Vagina (tissue), 2 donors: ENCODE measurements at regions of chr2 and their contacts with region 1.

Region 1: GRCh38 chr2:216692636-216693413 is 2.5 kb downstream of the IGFBP5 start:
- DNase-seq: peak in 1 of 2 donors; percentile 87
- H3K4me3 ChIP-seq: peak overlapping the region; percentile 68 to 88
- H3K27ac ChIP-seq: peak overlapping the region; percentile 90
- H3K4me1 ChIP-seq: peaks cover 51% of the 10 kb centered on the region
- H3K27me3 ChIP-seq: no peaks in the 10 kb centered on the region
- CTCF ChIP-seq: no peak
- POLR2A ChIP-seq: no peak

Region 2: DNA sequence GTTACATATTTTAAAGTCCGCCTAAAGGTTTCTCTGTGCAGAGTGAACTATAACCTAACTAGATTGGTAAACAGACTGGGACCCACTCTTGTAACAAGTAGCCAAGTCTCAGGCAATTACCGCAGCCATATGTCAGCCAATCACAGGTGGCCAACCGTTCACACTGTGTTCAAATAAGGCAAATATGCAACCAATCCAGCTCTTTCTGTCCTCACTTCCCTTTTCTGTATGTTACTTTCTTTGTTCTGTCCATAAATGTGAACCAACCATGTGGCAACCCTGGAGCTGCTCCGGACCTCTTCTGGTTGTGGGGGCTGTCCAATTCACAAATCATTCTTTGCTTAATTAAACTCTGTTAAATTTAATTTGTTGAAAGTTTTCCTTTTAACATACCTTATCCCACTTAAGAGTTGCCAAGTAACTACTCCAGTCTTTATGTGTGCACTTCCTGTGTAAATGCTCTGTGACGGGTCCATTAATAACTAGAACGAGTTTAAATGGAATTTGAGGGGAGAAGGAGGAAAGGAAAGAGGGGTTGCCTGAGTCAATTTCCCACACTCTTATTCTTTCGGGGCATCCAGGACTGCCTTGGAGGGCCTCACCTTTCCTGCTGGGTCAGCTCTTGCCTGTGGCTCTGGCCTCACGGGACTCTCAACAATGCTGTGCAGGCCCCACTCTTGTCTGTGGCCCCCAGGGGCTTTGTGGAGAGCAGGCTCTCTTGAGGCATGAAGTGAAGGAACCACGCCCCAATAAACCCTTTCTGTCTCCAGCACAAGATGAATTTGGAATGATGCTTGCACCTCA is 200.8 kb before region 1 on chr2:
- intact Hi-C with region 1: no loop called
- DNase-seq: no peak
- H3K4me3 ChIP-seq: no peak overlapping the region
- H3K27ac ChIP-seq: no peak overlapping the region
- H3K4me1 ChIP-seq: no peaks in the 10 kb centered on the region
- H3K27me3 ChIP-seq: no peaks in the 10 kb centered on the region
- CTCF ChIP-seq: no peak
- POLR2A ChIP-seq: no peak

Region 3: GRCh38 chr2:216619411-216620393 is 73.1 kb before region 1 on chr2:
- intact Hi-C with region 1: no loop called
- DNase-seq: no peak
- H3K4me3 ChIP-seq: no peak overlapping the region
- H3K27ac ChIP-seq: no peak overlapping the region
- H3K4me1 ChIP-seq: peaks cover 19% of the 10 kb centered on the region
- H3K27me3 ChIP-seq: no peaks in the 10 kb centered on the region
- CTCF ChIP-seq: no peak
- POLR2A ChIP-seq: no peak

Region 4: DNA sequence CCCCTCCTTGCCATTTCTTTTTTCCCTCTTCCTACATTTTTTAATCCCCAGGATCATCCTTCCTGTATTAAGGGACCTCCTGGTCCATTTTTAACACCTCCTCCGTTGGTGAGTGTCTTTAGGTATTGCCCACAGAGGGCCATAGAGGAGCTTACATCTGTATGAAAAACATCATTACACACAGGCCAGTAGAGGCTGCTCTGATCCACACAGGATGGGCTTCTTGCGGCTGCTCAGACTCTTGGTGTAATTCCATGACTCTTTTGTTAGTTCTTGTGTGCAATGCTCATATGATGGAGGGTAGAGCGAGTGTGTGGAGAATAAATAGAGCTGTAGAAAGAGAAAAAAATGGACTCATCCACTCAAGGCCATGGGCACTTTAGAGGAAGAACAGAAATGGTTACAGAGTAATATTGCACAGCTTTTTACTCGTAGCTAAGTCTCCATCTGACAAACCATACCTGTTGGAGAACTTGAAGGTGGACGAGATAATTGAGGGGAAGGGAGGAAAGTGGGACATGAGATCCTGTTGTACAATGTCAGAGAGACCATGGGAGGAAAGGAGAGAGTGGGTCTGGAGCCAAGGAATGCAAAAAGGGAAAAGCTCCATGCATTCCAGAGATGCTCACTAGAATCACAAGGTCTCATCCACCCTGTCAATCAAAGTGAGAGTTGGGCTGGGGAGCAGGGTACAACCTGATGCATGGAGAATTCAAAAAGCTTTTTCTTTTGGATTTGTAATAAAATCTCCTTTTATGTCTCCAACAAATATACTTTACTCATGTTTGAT is 296.7 kb after region 1 on chr2:
- intact Hi-C with region 1: loop called (anchors 5 kb)
- DNase-seq: no peak
- H3K4me3 ChIP-seq: no peak overlapping the region
- H3K27ac ChIP-seq: no peak overlapping the region
- H3K4me1 ChIP-seq: peaks cover 15% of the 10 kb centered on the region
- H3K27me3 ChIP-seq: no peaks in the 10 kb centered on the region
- CTCF ChIP-seq: no peak
- POLR2A ChIP-seq: no peak

Region 5: DNA sequence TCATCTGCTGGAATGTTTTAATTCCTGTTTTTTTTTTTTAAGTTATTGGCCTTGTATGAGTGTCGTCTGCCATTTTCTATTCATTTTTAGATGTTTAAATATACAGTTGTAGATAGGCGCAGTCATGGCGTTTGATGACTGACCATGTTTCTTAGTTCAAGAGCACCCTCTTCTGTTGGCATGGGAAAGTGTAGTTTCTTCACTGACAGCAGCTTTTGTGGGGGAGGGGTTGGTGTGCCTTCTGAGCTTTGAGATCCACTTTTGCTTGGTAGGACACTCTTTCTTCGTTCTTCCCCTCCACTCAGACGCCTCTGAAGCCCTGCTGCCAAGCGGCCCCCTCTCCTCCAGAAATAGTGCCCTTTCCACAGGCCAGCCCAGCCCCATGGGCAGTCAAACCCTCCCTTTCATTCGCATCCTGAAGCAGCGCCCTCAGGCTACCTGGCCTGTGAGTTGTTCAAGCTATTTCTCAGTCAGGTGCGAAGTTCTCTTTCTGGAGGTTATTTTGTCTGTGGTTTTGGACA is 818.0 kb after region 1 on chr2:
- intact Hi-C with region 1: loop called (anchors 5 kb)
- DNase-seq: no peak
- H3K4me3 ChIP-seq: no peak overlapping the region
- H3K27ac ChIP-seq: peak overlapping the region; percentile 9
- H3K4me1 ChIP-seq: peaks cover 6% of the 10 kb centered on the region
- H3K27me3 ChIP-seq: no peaks in the 10 kb centered on the region
- CTCF ChIP-seq: peak; percentile 45 to 76 (median 67)
- POLR2A ChIP-seq: no peak